Left lung (tissue), 14 donors: ENCODE measurements at regions of chr12 and their contacts with region 1.

Region 1: GRCh38 chr12:89524541-89525285 is at the start of gene GALNT4:
- DNase-seq: peak; percentile 90 to 94 (median 93)
- ATAC-seq: peak; percentile 92
- H3K4me3 ChIP-seq: peak within 1 kb of the TSS; percentile 90 to 97
- H3K27ac ChIP-seq: peak within 1 kb of the TSS; percentile 93 to 95
- H3K4me1 ChIP-seq: peaks cover 14 to 56% of the 10 kb centered on the region in 2 donors
- H3K27me3 ChIP-seq: no peaks in the 10 kb centered on the region
- CTCF ChIP-seq: peak; percentile 60 to 81
- polyA plus RNA-seq, gene GALNT4: 6.6 to 10.2 (median 7.5) TPM

Region 2: GRCh38 chr12:89040146-89040964 is 484.4 kb before region 1 on chr12:
- intact Hi-C with region 1: loop called in 1 of 2 experiments (anchors 10 kb)
- DNase-seq: peak in 2 of 4 donors; percentile 32 to 76
- ATAC-seq: no peak
- H3K4me3 ChIP-seq: no peak overlapping the region
- H3K27ac ChIP-seq: no peak overlapping the region
- H3K4me1 ChIP-seq: peaks cover 0 to 4% of the 10 kb centered on the region in 2 donors
- H3K27me3 ChIP-seq: no peaks in the 10 kb centered on the region
- CTCF ChIP-seq: no peak

Region 3: DNA sequence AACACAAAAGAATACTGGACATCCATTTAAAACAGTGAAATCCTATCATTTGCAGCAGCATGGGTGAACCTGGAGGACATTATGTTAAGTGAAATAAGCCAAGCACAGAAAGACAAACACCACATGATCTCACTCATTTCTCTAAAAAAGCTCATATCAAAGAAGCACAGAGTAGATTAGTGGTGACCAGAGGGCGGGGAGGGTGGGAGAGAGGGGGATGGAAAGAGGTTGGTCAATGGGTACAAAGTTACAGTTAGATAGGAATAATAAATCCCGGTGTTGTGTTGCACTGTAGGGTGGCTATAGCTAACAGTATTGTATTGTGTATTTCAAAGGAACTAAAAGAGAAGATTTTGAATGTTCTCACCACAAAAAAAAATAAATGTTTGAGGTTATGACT is 224.8 kb before region 1 on chr12:
- intact Hi-C with region 1: no loop called
- DNase-seq: no peak
- ATAC-seq: no peak
- H3K4me3 ChIP-seq: no peak overlapping the region
- H3K27ac ChIP-seq: no peak overlapping the region
- H3K4me1 ChIP-seq: no peaks in the 10 kb centered on the region
- H3K27me3 ChIP-seq: no peaks in the 10 kb centered on the region
- CTCF ChIP-seq: no peak

Region 4: DNA sequence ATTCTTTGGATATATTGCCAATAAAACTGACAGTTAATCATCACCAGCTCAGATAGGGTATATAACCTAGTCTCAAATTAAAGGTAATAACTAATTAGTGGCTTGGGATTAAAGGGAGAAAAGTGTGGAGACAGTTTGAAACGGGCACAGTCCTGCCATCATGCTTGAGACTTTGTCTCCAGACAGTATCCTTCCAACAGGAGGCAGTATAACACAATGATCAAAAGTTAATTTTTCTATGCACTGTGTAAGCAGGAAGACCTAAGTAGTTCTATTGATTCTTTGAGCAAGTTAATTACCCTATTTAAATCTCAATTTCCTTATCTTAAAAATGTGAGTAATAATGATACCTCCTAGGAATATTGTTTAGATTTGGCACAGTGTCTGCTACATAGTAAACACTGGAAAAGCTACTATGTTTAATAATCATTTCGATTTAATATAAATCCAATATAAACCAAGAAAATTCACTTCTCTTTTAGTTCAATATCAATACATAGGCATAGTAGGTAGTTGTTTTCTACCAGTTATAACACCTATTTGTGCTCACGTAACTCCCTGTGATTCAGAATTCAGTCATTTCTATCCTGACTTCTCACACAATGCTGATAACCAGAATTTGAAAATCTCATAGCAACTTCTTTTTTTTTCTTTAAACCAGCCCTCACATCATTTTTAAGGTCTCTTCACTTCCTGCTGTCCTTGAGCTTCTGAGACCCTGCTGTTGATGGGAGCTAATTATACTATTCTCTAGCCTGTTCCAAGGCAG is 53.8 kb before region 1 on chr12:
- intact Hi-C with region 1: loop called in 1 of 2 experiments (anchors 5 kb)
- DNase-seq: peak in 1 of 4 donors; percentile 23
- ATAC-seq: peak; percentile 92
- H3K4me3 ChIP-seq: no peak overlapping the region
- H3K27ac ChIP-seq: no peak overlapping the region
- H3K4me1 ChIP-seq: peaks cover 0 to 7% of the 10 kb centered on the region in 2 donors
- H3K27me3 ChIP-seq: no peaks in the 10 kb centered on the region
- CTCF ChIP-seq: peak; percentile 61 to 66